AG04450 (cell line): ENCODE measurements at regions of chr7 and their contacts with region 1.

Region 1: DNA sequence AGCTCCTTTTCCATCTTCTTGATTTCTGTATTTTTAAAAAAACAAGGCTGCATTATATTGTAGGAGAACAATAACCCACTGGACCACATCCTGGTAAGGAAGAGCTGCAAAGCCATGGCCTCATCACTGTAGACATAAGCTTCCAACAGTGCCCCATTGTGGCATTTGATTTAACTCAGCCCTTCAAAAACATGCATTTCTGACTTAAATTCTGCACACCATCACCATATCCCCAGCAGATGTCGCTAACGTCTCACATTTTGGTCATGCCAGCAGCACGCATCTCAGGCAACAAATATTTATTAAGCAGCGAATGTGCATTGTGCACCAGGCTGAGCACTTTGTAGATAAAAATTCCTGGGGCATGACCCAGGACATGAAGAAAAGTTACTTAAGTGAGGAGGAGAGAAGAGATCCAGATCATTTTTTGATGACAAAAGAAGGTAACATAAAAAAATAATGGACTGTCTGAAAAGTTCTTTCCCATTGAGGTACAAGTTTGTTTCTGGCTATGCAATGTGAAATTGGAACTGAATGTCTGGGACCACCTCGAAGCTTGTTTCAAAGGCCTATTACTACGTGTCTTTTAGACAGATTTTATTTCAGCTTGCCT is 164.6 kb upstream of the CDCA7L start:
- DNase-seq: peak; percentile 70
- H3K4me3 ChIP-seq: no peak overlapping the region
- H3K27ac ChIP-seq: no peak overlapping the region
- H3K27me3 ChIP-seq: no peaks in the 10 kb centered on the region
- CTCF ChIP-seq: peak; percentile 86

Region 2: GRCh38 chr7:22082886-22083703 is 27.2 kb before region 1 on chr7:
- CTCF ChIA-PET with region 1: interaction called, 33 read pairs
- POLR2A ChIA-PET with region 1: no interaction called
- DNase-seq: peak; percentile 44
- H3K4me3 ChIP-seq: peak overlapping the region; percentile 86
- H3K27ac ChIP-seq: peak overlapping the region; percentile 75
- H3K27me3 ChIP-seq: peaks cover 8% of the 10 kb centered on the region
- CTCF ChIP-seq: peak; percentile 92

Region 3: GRCh38 chr7:22120391-22121053 is 10.2 kb after region 1 on chr7:
- CTCF ChIA-PET with region 1: interaction called, 13 read pairs
- POLR2A ChIA-PET with region 1: no interaction called
- DNase-seq: no peak
- H3K4me3 ChIP-seq: no peak overlapping the region
- H3K27ac ChIP-seq: no peak overlapping the region
- H3K27me3 ChIP-seq: peaks cover 2% of the 10 kb centered on the region
- CTCF ChIP-seq: no peak

Region 4: DNA sequence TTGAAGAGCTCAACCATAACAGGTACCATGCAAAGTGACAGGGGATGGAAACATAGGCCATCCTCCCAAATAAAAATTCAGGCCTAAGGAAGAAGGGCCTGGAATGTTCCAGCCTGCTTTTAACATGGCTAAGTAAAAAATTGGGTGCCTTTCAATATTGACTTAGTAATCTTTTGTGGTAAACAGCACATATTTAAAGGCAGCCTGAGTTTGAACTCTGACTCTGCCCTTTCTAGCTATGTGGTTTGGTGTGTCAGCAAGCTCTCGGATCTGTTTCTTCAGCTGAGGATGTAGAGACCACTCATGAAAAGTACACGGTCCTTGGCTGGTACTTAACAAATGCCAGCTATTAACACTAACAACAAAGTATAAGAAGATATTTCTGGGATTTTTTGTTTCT is 27.1 kb after region 1 on chr7:
- CTCF ChIA-PET with region 1: interaction called, 27 read pairs
- POLR2A ChIA-PET with region 1: no interaction called
- DNase-seq: no peak
- H3K4me3 ChIP-seq: no peak overlapping the region
- H3K27ac ChIP-seq: peak overlapping the region; percentile 73
- H3K27me3 ChIP-seq: peaks cover 2% of the 10 kb centered on the region
- CTCF ChIP-seq: no peak

Region 5: GRCh38 chr7:22295402-22296264 is 185.3 kb after region 1 on chr7:
- CTCF ChIA-PET with region 1: interaction called, 81 read pairs
- POLR2A ChIA-PET with region 1: no interaction called
- DNase-seq: no peak
- H3K4me3 ChIP-seq: no peak overlapping the region
- H3K27ac ChIP-seq: no peak overlapping the region
- H3K27me3 ChIP-seq: no peaks in the 10 kb centered on the region
- CTCF ChIP-seq: peak; percentile 30; the same call in 1 of the 2 replicates

Region 6: DNA sequence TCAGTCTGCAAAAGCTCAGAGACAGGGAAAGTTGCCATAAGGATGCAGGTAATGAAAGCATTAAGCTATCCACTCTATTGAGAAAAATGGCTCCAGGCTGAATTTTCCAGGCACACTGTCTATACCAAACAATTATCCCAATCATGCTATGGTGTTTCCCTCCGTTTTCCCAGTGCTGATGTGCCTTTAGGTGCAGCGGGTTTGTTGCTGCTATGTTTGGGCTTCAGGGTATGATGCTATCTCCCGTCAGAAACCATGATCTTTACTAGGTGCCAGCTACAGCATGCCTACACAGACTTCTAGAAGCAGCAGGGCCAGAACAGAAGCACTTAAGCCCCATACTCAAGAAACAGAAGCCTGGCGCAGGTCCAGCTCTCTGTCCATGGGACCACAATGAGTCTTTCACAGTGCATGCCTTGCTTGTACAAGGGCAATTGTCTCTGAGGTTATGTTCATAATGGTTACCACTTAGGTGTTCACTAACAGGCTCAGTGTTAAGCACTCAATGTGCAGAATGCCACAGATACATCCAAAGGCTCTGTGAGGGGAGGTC is 370.3 kb after region 1 on chr7:
- CTCF ChIA-PET with region 1: interaction called, 50 read pairs
- POLR2A ChIA-PET with region 1: no interaction called
- DNase-seq: no peak
- H3K4me3 ChIP-seq: no peak overlapping the region
- H3K27ac ChIP-seq: no peak overlapping the region
- H3K27me3 ChIP-seq: no peaks in the 10 kb centered on the region
- CTCF ChIP-seq: no peak

Region 7: DNA sequence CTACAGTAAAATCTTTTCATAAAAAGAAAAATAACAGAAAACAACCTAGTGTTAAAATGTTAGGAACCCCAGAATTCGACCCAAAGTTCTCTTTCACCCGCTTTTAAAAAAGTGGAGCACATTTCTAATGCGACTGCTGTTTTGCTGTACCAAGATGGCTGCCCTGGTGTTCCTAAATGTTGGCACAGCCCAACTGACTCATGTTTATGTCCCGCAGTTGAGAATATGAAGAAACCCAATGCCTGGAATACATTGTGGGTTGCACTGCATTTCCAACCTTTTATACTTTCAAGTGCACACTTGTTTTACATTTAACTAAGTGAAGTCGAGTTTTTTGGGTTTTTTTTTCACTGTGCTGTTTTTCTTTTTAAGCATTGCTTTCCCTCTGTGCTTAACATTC is 388.7 kb after region 1 on chr7:
- CTCF ChIA-PET with region 1: interaction called, 33 read pairs
- POLR2A ChIA-PET with region 1: no interaction called
- DNase-seq: no peak
- H3K4me3 ChIP-seq: peak overlapping the region; percentile 29
- H3K27ac ChIP-seq: no peak overlapping the region
- H3K27me3 ChIP-seq: no peaks in the 10 kb centered on the region
- CTCF ChIP-seq: no peak